Transverse colon (tissue), 4 donors: ENCODE measurements at regions of chr14 and their contacts with region 1.

Region 1: DNA sequence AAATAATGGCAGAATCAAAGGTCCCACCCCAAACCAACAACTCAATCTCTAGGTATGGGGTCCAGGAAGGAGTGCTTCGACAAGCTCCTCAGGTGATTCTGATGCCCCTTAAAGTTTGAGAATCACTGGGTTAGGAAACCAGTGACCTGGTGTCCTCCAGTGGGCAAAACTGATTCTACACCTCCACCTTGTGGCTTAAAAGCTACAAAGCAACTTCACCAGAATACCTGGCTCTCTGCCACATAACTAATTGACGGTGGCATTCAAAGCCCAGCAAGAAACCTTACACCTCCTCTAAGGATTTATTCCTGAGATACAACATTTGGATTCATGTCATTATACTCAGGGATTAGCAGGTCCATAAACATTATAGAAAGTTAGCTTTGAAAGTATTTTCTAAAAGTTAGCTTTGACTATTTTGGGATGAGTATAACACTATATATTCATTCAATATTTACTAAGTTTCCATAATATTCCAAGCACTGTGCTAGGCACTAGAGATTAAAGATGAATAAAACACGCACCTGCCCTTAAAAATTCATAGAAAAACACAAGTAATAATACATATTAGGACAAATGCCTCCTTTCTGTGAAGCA is 45.4 kb downstream of the DCAF5 start:
- DNase-seq: peak; percentile 33
- H3K4me3 ChIP-seq: no peak overlapping the region
- H3K27ac ChIP-seq: peak overlapping the region in 1 of 4 donors; percentile 7
- H3K4me1 ChIP-seq: peaks cover 0 to 19% (median 6%) of the 10 kb centered on the region in 4 donors
- H3K27me3 ChIP-seq: no peaks in the 10 kb centered on the region
- CTCF ChIP-seq: peak; percentile 55 to 81 (median 57)
- EP300 ChIP-seq: no peak
- POLR2A ChIP-seq: no peak

Region 2: GRCh38 chr14:68862954-68863594 is 244.4 kb before region 1 on chr14:
- in situ Hi-C with region 1: no loop called
- intact Hi-C with region 1: loop called (anchors 5 kb)
- DNase-seq: peak; percentile 82
- H3K4me3 ChIP-seq: no peak overlapping the region
- H3K27ac ChIP-seq: no peak overlapping the region
- H3K4me1 ChIP-seq: no peaks in the 10 kb centered on the region
- H3K27me3 ChIP-seq: no peaks in the 10 kb centered on the region
- CTCF ChIP-seq: peak; percentile 61 to 74 (median 73)
- EP300 ChIP-seq: no peak
- POLR2A ChIP-seq: no peak